Mammary epithelial cell (primary cell): ENCODE measurements at regions of chr15 and their contacts with region 1.

Region 1: GRCh38 chr15:27757050-27757449 is 342.1 kb downstream of the OCA2 start:
- DNase-seq: no peak
- H3K4me3 ChIP-seq: no peak overlapping the region
- H3K27ac ChIP-seq: no peak overlapping the region
- H3K4me1 ChIP-seq: no peaks in the 10 kb centered on the region
- H3K27me3 ChIP-seq: no peaks in the 10 kb centered on the region
- CTCF ChIP-seq: no peak

Region 2: DNA sequence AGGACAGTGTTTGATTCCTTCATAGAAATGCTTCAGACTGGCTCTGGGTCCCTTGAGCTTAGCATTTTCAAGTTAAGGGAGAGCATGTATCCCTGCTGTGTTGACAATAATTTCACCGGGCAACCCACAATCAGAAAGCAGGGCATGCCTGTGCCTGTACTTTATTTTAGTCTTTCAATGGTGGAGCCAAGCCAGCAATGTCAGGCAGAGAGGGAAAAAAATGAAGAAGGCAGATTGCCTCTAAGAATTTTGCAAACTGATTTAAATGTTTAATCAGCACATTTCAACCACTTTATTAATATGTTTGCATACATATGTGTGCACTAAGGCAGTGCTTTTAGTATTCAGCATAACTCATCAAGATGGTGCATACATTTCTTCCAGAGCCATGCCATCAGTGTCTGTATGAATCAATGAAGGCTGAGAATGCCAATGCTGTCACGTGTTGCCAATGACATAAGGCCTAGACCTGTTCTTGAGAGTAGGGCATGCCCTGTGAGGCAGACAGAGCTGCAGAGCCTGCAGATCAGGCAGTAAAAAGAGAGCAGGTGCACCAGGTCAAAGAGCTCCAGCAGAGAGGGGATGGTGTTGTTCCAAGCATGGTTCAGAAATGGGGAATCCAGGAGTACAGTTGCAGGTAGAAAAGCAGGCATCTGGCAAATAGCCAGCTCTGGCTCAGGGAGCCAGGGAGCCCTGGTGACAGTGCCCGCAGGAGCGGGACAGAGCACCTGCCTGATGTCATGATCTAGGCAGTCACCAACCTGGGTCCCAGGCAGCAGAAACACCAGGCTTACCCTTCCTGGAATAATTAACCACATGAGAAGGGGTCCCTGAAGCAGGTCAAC is 277.5 kb before region 1 on chr15:
- CTCF ChIA-PET with region 1: no interaction called
- dilution Hi-C with region 1: no loop called
- in situ Hi-C with region 1: no loop called
- intact Hi-C with region 1: no loop called
- DNase-seq: no peak
- H3K4me3 ChIP-seq: no peak overlapping the region
- H3K27ac ChIP-seq: no peak overlapping the region
- H3K4me1 ChIP-seq: no peaks in the 10 kb centered on the region
- H3K27me3 ChIP-seq: no peaks in the 10 kb centered on the region
- CTCF ChIP-seq: no peak

Region 3: DNA sequence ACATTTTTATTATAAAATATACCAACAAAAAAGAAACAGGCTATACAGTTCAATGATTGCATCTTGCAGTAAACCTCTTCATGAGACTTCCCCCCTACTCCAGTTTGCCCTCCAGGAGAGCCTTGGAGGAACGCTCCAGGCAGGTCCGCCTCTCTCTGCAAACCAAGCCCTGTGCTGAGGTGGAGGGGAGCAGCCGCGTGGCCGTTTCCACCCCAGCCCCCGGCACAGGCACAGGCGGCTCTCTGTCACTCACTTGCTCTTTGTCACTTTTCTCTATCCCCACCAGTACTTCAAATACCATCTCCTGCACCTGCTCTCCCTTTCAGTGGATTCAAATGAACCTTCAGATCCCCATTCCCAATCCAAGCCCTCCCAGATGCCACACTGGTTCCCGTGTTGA is 137.8 kb before region 1 on chr15:
- CTCF ChIA-PET with region 1: no interaction called
- dilution Hi-C with region 1: no loop called
- in situ Hi-C with region 1: no loop called
- intact Hi-C with region 1: no loop called
- DNase-seq: no peak
- H3K4me3 ChIP-seq: no peak overlapping the region
- H3K27ac ChIP-seq: no peak overlapping the region
- H3K4me1 ChIP-seq: no peaks in the 10 kb centered on the region
- H3K27me3 ChIP-seq: no peaks in the 10 kb centered on the region
- CTCF ChIP-seq: no peak

Region 4: DNA sequence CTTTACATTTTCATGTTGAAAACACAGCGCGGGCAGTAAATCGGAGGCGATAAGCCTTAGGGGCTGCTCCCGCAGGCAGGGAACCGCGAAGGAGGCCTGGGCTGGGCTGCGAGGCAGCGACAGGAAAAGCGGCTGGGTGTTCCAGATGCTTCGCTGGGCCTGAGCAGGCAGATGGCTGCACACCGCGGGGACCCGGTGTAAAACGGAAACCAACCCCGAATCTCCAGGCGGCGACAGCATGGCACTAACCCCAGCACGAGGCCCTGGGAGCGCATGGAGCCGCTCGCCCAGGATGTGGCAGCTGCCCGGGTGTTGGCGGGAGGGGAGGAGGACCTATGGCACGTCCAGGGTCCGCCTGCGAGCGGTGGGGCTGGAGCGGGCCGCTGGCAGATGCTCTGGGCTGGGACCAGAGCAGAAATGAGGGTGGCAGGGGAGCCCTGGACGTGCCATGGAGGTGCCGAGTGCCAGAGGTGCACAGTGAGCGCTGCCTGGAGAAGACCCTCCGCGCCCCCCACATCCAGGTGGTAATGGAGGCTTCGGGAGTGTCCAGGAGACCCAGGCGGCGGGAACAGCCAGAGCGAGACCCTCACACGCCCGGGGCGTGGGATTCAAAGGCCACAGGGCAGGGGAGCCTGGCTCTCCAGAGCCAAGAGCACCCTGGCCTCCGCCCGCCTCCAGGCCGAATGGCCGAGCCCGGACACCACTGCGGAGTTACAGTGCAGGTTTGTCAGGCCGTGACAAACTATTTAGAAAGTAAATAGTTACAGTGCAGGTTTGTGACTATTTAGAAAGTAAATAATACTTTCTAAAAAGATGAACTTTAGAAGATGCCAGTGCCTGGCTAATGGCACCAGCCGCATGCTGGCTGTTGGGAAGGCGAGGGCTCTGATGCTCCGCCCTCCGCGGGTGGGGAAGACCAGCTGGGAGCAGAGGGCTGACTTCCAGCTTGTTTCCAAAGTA is 48.5 kb after region 1 on chr15:
- CTCF ChIA-PET with region 1: no interaction called
- dilution Hi-C with region 1: loop called (anchors 5 kb)
- in situ Hi-C with region 1: no loop called
- intact Hi-C with region 1: no loop called
- DNase-seq: no peak
- H3K4me3 ChIP-seq: no peak overlapping the region
- H3K27ac ChIP-seq: no peak overlapping the region
- H3K4me1 ChIP-seq: no peaks in the 10 kb centered on the region
- H3K27me3 ChIP-seq: no peaks in the 10 kb centered on the region
- CTCF ChIP-seq: no peak